ENCODE measurements at regions of chr2 and their contacts with region 1.

Region 1: DNA sequence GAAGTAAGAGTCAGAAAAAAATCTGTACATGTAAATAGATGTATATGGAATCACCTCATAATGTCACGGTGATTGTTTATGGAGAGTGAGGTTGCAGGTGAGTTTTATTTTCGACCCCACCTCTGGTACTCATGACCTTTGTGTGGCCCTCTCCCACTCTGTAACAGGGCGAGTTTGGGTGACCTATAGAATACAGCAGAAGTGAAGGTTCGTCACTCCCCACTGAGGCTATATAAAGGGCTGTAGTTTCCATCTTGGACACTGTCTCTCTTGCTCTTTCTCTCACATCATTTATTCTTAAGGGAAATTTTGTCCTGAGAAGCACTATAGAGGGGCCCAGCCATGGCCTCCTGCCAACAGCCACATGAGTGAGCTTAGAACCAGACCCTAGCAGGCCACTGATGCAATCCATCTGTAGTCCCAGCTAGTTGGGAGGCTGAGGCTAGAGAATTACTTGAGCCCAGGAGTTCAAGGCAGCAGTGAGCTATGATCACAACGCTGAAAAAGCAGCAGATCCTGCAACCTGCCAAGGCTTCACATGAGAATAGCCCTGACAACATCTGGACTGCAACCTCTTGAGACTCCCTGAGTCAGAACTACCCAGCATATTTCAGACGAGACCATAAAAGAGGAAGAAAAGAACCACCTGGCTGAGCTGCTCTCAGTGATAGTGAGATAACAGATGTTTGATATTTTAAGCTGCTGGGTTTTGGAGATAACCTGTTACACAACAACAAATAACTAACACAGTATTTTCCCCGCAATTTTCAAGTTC is 74.3 kb upstream of the SLC1A4 start:
- DNase-seq: no peak
- H3K4me3 Mint-ChIP-seq: no peak overlapping the region
- H3K27ac Mint-ChIP-seq: no peak overlapping the region
- H3K4me1 Mint-ChIP-seq: peaks cover 41% of the 10 kb centered on the region
- H3K27me3 Mint-ChIP-seq: no peaks in the 10 kb centered on the region

Region 2: DNA sequence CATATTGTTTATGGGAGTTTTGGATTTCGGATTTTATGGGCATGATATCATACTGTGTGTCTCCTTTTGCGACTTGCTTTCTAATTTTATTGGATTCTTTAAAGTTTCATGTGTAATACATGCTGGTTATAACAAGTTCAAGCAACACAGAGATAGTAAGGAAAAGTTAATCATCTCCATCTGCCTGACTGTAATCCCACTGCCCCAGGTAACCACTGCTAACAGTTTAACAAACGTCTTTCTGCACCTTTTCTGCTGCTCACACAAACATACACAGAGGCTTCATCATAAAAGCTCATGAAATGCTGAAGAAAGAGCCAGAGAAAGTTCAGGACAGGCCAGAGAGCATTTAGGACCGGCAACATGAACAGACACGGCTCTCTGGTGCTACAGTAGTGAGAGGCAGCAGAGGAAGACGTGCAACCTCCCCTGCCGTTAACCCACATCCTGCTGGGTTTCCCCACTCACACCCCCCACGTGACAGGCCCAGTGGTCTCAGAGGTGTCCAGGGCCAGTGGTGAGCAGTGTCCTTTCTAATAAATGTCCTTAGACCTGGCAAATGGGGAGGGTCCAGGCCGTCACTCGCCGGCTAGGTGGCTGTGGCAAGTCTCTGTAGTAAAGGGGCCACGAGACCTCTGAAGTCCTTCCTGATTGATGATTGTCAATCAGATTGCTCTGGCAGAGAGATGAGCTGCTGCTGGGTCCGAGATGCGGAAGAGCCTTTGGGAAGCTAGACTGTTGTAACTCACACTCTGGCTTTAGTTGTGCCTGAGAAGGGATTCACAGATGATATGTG is 31.2 kb after region 1 on chr2:
- CTCF ChIA-PET with region 1: interaction called, 27 read pairs
- POLR2A ChIA-PET with region 1: interaction called, 21 read pairs
- DNase-seq: peak; percentile 84
- H3K4me3 Mint-ChIP-seq: peak overlapping the region; percentile 68
- H3K27ac Mint-ChIP-seq: peak overlapping the region; percentile 94
- H3K4me1 Mint-ChIP-seq: peaks cover 58% of the 10 kb centered on the region
- H3K27me3 Mint-ChIP-seq: no peaks in the 10 kb centered on the region

Region 3: GRCh38 chr2:64988420-64989125 is 73.7 kb after region 1 on chr2:
- CTCF ChIA-PET with region 1: interaction called, 17 read pairs
- POLR2A ChIA-PET with region 1: interaction called, 50 read pairs
- DNase-seq: peak; percentile 88
- H3K4me3 Mint-ChIP-seq: peak overlapping the region; percentile 72
- H3K27ac Mint-ChIP-seq: peak overlapping the region; percentile 74
- H3K4me1 Mint-ChIP-seq: peaks cover 70% of the 10 kb centered on the region
- H3K27me3 Mint-ChIP-seq: peaks cover 4% of the 10 kb centered on the region

Region 4: DNA sequence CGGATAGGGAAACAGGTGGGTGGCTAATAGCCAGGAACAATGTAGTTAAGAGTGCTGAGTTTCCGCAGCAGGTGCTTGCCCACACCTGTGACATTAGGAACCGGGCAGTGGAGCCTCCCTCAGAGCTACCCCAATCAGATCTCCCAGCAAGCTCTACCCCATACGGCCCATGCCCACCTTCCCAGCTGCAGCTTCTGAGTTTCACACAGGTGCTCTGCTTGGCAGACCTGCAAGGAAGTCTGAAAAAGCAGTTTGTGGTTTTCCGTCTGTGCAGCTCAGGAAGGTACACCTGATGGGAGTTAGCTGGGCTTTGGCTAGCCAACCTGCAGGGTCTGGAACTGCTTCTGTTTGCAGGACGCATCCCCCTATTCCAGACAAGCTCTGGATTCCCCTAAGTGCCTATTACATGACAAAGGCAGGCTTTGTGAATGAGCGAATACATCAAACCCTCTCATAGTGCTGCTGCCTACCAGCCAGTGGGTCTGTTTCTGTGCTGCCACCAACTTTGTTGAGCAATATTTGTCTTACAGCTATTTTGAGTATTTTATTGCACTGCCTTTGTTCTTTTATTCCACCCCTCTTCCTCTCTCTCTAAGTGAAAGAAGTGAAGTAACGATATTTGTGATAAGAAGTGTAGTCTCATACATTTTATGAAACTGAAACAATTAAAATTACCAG is 116.6 kb after region 1 on chr2:
- CTCF ChIA-PET with region 1: interaction called, 53 read pairs
- POLR2A ChIA-PET with region 1: interaction called, 4 read pairs
- DNase-seq: no peak
- H3K4me3 Mint-ChIP-seq: no peak overlapping the region
- H3K27ac Mint-ChIP-seq: no peak overlapping the region
- H3K4me1 Mint-ChIP-seq: peaks cover 23% of the 10 kb centered on the region
- H3K27me3 Mint-ChIP-seq: no peaks in the 10 kb centered on the region

Region 5: DNA sequence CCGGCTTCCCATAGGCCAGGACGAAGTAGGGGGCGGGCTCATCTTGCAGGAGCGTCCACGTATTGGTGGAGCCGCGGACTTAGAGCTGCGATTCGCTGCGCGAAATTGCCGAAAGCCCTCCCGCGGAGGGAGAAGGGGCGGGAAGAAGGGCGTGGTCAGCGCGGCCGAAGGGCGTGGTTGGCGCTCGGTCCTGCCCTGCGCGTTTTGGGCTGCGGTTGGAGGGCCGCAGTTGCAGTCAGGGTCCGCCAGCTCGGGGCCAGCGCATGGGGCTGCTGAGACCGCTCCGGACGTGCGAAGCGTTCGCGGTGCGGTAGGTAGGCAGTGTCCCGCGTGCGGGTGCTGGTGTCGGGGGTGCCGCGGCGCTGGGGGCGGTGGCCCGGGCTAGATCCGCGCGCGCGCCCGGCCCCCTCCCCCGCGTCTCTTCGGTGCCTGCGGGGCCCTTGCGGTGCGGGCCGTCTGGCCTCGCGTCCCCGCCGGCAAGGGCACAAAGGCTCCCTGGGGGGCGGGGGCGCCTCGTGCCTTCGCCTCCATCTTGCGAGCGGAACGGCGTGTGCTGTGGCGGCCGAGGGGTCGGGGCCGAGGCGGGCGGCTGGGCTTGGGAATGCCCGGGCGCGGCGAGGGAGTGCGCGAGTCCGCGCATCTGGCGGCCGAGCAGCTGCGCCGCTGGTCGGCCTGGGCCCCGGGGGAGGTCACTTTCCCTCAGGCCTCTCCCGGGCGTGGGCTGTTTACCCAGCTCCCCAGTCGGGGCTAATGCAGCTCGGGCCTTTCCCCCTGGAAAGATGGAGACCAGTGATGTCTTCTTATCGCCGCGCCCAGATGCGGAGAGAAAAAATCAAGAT is 141.5 kb after region 1 on chr2 and contains the start of gene CEP68:
- CTCF ChIA-PET with region 1: interaction called, 27 read pairs
- POLR2A ChIA-PET with region 1: interaction called, 9 read pairs
- DNase-seq: peak; percentile 98
- H3K4me3 Mint-ChIP-seq: peak within 1 kb of the TSS; percentile 94
- H3K27ac Mint-ChIP-seq: peak within 1 kb of the TSS; percentile 77
- H3K4me1 Mint-ChIP-seq: peaks cover 59% of the 10 kb centered on the region
- H3K27me3 Mint-ChIP-seq: peaks cover under 1% of the 10 kb centered on the region
- total RNA-seq, gene CEP68: 12.8 to 13.3 TPM